Activated B cell treated with CpG ODN at 0.5 μM for 24 hours (primary cell): ENCODE measurements at regions of chr7 and their contacts with region 1.

Region 1: DNA sequence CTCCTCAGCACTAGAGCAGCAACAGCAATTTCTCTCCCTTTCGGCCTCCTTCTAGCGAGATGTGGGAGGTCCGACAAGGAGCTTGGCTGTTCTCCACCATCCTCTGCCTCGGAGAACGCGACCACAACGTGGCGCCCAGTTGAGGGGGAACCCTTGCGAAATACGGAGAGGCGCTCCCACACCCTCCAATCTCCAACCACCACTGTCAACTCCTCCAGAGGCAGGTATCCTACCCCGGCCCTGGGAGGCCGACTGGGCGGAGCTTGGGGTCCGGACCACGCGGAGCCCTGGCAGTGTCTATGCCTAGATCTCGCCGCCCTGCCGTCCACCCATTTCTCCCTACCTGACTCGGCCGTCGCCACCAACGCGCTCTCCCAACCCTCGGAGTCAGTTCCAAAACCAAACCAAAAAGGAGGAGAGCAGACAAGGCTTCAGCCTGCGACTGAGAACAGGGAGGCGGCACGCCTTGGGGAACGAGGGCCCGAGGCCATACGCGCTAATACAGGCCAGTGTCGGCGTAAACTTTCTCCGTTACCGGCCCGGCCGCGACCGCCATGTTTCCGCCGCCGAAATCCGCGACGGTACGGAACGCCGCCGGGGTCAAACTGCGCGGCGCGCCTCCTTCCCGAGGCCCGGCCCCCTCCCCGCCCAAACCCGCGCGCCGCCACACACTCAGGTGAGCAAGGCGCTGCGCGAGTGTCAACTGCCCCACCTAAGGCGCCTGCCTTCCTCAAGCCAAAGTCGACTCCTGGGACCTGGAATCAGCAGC is at the start of gene TMEM168:
- DNase-seq: peak; percentile 81
- ATAC-seq: peak; percentile 83
- H3K4me3 Mint-ChIP-seq: peak within 1 kb of the TSS; percentile 91
- H3K27ac Mint-ChIP-seq: peak within 1 kb of the TSS; percentile 94
- H3K4me1 Mint-ChIP-seq: peaks cover 27% of the 10 kb centered on the region
- H3K27me3 Mint-ChIP-seq: no peaks in the 10 kb centered on the region
- CTCF ChIP-seq: no peak
- total RNA-seq, gene TMEM168: 22.1 and 24.2 TPM in 2 replicates

Region 2: GRCh38 chr7:111083413-111083812 is 1706.6 kb before region 1 on chr7:
- CTCF ChIA-PET with region 1: no interaction called
- POLR2A ChIA-PET with region 1: no interaction called
- intact Hi-C with region 1: loop called (anchors 5 kb)
- DNase-seq: no peak
- ATAC-seq: peak; percentile 96
- H3K4me3 Mint-ChIP-seq: peak overlapping the region; percentile 59
- H3K27ac Mint-ChIP-seq: peak overlapping the region; percentile 90
- H3K4me1 Mint-ChIP-seq: peaks cover 48% of the 10 kb centered on the region
- H3K27me3 Mint-ChIP-seq: no peaks in the 10 kb centered on the region
- CTCF ChIP-seq: no peak

Region 3: GRCh38 chr7:112080441-112080840 is 709.6 kb before region 1 on chr7:
- CTCF ChIA-PET with region 1: no interaction called
- POLR2A ChIA-PET with region 1: no interaction called
- intact Hi-C with region 1: loop called (anchors 10 kb)
- DNase-seq: no peak
- ATAC-seq: peak; percentile 84
- H3K4me3 Mint-ChIP-seq: peak overlapping the region; percentile 33
- H3K27ac Mint-ChIP-seq: peak overlapping the region; percentile 33
- H3K4me1 Mint-ChIP-seq: peaks cover 48% of the 10 kb centered on the region
- H3K27me3 Mint-ChIP-seq: no peaks in the 10 kb centered on the region
- CTCF ChIP-seq: no peak

Region 4: GRCh38 chr7:112386619-112387018 is 403.4 kb before region 1 on chr7:
- CTCF ChIA-PET with region 1: no interaction called
- POLR2A ChIA-PET with region 1: no interaction called
- intact Hi-C with region 1: loop called (anchors 5 kb)
- DNase-seq: no peak
- ATAC-seq: no peak
- H3K4me3 Mint-ChIP-seq: no peak overlapping the region
- H3K27ac Mint-ChIP-seq: no peak overlapping the region
- H3K4me1 Mint-ChIP-seq: peaks cover 5% of the 10 kb centered on the region
- H3K27me3 Mint-ChIP-seq: peaks cover 5% of the 10 kb centered on the region
- CTCF ChIP-seq: no peak

Region 5: DNA sequence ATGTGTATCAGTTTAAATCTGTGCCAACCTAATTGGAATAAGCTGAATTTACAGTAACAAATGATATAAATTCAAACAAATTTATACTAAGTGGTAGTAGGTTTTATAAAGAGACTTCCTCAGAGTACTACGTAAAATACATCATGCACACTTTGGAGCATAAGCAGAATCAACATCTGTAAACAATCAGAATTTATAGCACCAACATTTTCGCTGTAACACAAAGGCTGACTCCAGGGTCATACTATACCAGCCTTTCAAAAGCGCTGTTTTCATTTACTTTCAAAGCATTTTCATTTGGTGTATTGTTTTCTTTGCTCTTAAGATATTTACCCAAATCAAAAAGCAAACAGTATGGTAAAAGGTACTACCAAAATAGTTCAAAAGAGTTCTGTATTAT is 29.5 kb after region 1 on chr7:
- CTCF ChIA-PET with region 1: no interaction called
- POLR2A ChIA-PET with region 1: interaction called, 11 read pairs
- intact Hi-C with region 1: no loop called
- DNase-seq: no peak
- ATAC-seq: no peak
- H3K4me3 Mint-ChIP-seq: no peak overlapping the region
- H3K27ac Mint-ChIP-seq: no peak overlapping the region
- H3K4me1 Mint-ChIP-seq: no peaks in the 10 kb centered on the region
- H3K27me3 Mint-ChIP-seq: no peaks in the 10 kb centered on the region
- CTCF ChIP-seq: no peak

Region 6: DNA sequence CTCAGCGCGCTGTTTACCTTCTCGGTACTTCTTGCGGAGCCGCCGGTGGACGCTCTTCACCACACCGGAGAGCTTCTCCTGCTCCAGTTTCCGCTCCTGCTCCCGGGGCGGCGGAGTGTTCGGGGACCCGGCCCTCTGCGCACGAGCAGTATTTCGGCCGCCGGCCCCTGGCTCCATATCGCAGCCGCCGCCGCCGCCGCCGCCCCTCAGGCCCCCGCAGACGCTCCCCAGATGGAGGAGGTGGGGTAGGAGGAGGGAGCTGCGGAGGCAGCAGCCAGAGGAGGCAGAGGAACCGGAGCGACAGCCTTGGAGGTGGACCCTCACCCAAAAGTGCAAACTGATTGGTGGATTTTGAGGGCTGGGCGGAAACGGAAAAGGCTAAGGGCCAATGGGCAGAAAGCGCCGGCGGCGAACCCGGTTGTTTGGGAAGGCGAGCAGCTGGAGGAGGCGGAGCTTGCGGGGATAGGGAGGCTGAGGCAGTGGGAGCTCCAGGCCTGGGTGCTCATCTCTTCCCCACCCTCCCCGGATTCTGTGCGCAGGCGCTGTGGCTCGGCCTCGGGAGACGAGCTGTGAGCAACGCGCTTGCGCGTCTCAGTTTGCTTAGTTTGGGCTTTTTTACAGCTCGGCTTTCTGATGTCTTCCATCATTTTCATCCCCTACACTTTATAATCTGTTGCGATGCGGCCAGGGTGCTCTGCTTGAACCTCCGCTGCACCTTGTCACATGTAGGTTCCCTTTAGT is 149.7 kb after region 1 on chr7:
- CTCF ChIA-PET with region 1: no interaction called
- POLR2A ChIA-PET with region 1: interaction called, 17 read pairs
- intact Hi-C with region 1: loop called (anchors 1 kb)
- DNase-seq: peak; percentile 97
- ATAC-seq: peak; percentile 95
- H3K4me3 Mint-ChIP-seq: peak overlapping the region; percentile 99
- H3K27ac Mint-ChIP-seq: peak overlapping the region; percentile 97
- H3K4me1 Mint-ChIP-seq: peaks cover 46% of the 10 kb centered on the region
- H3K27me3 Mint-ChIP-seq: no peaks in the 10 kb centered on the region
- CTCF ChIP-seq: no peak

Region 7: DNA sequence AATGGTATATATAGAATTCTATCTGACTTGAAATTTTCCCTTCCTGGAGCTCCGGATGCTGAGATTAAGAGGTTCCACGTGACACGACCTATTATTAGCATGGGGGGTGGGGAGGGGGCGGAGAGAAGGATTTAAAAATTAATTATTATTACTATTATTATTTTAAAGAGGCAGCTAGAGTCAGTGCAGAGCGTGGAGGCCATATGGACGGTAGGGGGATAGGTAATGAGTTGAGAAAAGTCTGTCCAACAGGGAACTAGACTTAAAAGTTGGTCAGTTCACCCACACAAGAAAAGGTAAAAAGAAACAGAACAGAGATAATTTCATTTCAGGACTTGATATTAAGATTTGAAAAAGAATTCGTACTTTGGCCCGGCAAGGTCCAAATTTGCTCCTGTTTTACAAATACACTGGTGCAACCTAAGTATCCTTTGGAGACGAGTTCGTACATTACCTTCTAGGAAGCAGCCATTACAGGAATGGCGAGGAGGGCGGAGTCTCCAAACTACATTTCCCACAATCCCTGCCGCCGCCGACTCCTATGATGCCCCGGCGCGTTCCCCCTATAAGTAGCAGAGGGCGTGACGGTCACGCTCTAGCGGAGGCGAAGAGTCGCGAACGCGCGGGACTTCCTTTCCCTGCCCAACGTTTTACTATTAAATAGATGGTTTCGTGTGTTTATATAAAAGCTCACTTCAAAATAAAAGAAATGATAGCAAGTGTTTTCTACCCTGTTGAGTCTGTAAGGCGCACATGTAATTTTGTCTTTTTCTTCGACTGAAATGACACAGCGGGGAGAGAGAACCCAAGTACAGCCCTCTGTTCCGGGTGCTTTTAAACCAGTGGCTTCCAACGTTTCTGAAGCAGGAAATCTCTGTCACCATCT is 328.3 kb after region 1 on chr7 and contains the start of gene SMIM30:
- CTCF ChIA-PET with region 1: no interaction called
- POLR2A ChIA-PET with region 1: interaction called, 4 read pairs
- intact Hi-C with region 1: loop called (anchors 1 kb)
- DNase-seq: peak; percentile 77
- ATAC-seq: peak; percentile 100
- H3K4me3 Mint-ChIP-seq: peak within 1 kb of the TSS; percentile 93
- H3K27ac Mint-ChIP-seq: peak within 1 kb of the TSS; percentile 97
- H3K4me1 Mint-ChIP-seq: peaks cover 23% of the 10 kb centered on the region
- H3K27me3 Mint-ChIP-seq: no peaks in the 10 kb centered on the region
- CTCF ChIP-seq: no peak
- total RNA-seq, gene SMIM30: 28.7 and 30.6 TPM in 2 replicates